BJ (cell line): ENCODE measurements at regions of chr12 and their contacts with region 1.

Region 1: DNA sequence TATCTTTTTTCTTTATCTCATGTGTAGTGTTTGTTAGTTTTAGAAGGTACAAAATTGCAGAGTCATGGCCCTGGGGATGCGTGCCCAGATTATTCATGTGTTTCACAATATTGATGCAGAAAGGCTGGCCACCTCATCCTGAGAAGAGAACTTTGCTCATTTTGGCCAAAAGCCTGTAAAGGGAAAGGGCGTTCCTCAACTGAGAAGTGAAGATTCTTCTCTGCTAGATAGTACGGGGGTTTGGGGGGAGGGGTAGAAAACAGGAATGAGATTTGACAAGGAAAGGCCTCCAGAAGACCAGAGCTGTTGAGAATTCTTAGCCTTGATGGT is 1.7 kb downstream of the MGST1 start:
- DNase-seq: peak; percentile 75
- H3K4me3 ChIP-seq: no peak overlapping the region; the same call in 1 of the 2 replicates
- H3K27me3 ChIP-seq: no peaks in the 10 kb centered on the region
- CTCF ChIP-seq: no peak

Region 2: DNA sequence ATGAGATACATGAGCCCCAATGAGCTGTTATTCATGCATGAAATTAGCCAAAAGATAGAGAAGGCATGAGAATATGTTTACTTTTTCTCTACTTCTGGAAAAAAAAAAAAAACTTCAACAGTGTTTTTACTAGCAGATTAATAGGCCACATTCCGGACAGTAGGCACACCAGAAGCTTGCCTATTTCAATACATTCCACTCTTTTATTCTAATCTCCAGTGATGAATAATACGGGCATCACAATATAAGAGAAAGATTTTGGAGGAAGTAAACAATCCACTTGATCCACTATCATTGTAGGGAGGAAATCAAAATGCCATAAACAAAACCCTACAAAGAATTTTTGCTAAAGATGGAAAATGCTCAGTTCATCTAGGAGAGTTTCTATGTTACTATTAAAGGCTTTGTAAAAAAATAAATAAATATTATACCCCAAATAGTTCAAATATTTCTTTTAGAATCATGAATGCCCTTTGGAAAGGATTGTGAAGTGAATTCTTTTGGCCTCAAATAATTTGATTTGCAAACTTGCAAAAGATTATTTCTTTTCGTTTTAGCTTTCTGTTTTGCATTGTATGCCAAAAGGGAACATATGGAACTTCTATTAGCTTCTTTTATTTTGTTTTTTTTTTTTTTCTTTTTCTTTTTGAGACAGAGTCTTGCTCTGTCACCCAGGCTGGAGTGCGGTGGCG is 792.5 kb before region 1 on chr12:
- CTCF ChIA-PET with region 1: no interaction called
- POLR2A ChIA-PET with region 1: interaction called, 24 read pairs
- DNase-seq: no peak
- H3K4me3 ChIP-seq: no peak overlapping the region
- H3K27me3 ChIP-seq: no peaks in the 10 kb centered on the region
- CTCF ChIP-seq: no peak

Region 3: GRCh38 chr12:16389594-16389993 is 40.5 kb after region 1 on chr12:
- CTCF ChIA-PET with region 1: no interaction called
- POLR2A ChIA-PET with region 1: no interaction called
- DNase-seq: peak; percentile 31
- H3K4me3 ChIP-seq: no peak overlapping the region
- H3K27me3 ChIP-seq: no peaks in the 10 kb centered on the region
- CTCF ChIP-seq: no peak

Region 4: GRCh38 chr12:16606201-16606849 is 257.2 kb after region 1 on chr12:
- CTCF ChIA-PET with region 1: no interaction called
- POLR2A ChIA-PET with region 1: no interaction called
- DNase-seq: no peak
- H3K4me3 ChIP-seq: no peak overlapping the region
- H3K27me3 ChIP-seq: no peaks in the 10 kb centered on the region
- CTCF ChIP-seq: no peak